ENCODE measurements at regions of chr16 and their contacts with region 1.

Region 1: GRCh38 chr16:48164907-48165726 is 9.3 kb upstream of the ABCC12 start:
- DNase-seq: peak; percentile 13
- H3K4me3 ChIP-seq: no peak overlapping the region
- H3K27ac ChIP-seq: no peak overlapping the region
- H3K27me3 ChIP-seq: no peaks in the 10 kb centered on the region
- CTCF ChIP-seq: peak; percentile 85

Region 2: DNA sequence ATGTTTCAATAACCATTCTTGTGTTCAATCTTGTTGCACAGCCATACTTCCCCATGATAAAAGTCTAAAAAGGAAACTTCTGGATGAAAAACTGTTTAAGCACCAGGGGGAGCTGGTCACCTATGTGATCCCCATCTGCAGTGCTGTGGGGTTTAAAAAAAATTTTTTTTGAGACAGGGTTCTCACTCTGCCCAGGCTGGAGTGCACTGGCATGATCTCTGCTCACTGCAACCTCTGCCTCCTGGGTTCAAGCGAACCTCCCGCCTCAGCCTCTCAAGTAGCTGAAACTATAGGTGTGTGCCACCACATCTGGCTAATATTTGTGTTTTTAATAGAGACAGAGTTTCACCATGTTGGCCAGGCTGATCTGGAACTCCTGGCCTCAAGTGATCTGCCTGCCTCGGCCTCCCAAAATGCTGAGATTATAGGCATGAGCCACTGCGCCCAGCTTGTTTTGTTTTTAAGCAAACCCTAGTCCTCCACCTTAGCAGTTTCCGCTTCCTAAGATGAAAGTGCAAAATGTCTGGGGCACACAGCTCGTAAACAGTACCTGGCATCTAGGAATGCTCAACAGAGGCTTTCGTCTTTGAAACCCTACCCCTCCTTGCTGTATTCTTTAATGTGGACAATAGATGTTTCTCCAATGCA is 1217.1 kb before region 1 on chr16:
- CTCF ChIA-PET with region 1: interaction called, 43 read pairs
- POLR2A ChIA-PET with region 1: no interaction called
- DNase-seq: no peak
- H3K4me3 ChIP-seq: no peak overlapping the region
- H3K27ac ChIP-seq: no peak overlapping the region
- H3K27me3 ChIP-seq: no peaks in the 10 kb centered on the region
- CTCF ChIP-seq: peak; percentile 73

Region 3: DNA sequence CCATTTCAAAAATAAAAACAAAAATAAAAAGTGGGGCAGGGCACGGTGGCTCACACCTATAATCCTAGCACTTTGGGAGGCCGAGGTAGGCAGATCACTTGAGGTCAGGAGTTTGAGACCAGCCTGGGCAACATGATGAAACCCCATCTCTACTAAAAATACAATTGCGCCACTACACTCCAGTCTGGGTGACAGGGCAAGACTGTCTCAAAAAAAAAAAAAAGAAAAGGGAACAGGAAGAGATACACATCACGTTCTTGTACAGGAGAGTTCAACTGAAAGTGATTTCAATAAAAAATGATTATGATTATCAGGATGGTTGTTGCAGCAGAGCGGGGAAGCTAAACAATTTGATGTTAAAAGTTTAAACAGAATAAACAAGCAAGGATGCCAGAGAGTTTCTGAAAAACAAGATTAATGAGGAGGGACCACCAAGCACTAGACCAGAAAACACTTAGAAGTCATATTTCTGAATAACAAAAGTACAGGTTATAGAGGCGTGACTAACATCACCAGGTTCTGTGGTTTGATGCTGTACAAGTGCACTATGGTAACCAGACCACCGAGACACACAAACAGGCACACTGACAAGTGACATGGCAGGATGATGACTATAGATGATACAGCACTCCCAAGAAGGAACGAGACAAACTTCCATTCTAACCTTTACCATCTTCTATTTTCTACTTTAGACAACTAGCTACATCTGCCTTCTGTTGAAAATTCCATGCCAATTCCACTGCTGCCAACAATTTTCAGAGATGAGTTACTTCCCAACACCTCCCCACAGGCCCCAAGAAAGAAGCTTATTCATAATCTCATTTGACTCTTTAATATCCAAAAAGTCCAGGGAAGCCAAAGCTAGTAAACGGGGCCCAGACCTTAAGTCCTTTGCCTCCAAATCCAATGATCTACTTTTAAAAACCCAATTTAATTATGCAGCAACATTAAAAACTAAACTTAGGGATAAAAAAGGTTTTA is 1203.5 kb before region 1 on chr16:
- CTCF ChIA-PET with region 1: interaction called, 11 read pairs
- POLR2A ChIA-PET with region 1: no interaction called
- DNase-seq: no peak
- H3K4me3 ChIP-seq: no peak overlapping the region
- H3K27ac ChIP-seq: peak overlapping the region; percentile 21
- H3K27me3 ChIP-seq: no peaks in the 10 kb centered on the region
- CTCF ChIP-seq: no peak

Region 4: GRCh38 chr16:47037746-47038458 is 1127.2 kb before region 1 on chr16:
- CTCF ChIA-PET with region 1: interaction called, 39 read pairs
- POLR2A ChIA-PET with region 1: interaction called, 4 read pairs
- DNase-seq: peak; percentile 44
- H3K4me3 ChIP-seq: peak overlapping the region; percentile 66
- H3K27ac ChIP-seq: no peak overlapping the region
- H3K27me3 ChIP-seq: peaks cover 11% of the 10 kb centered on the region
- CTCF ChIP-seq: peak; percentile 88

Region 5: GRCh38 chr16:47136101-47136820 is 1028.9 kb before region 1 on chr16:
- CTCF ChIA-PET with region 1: interaction called, 99 read pairs
- POLR2A ChIA-PET with region 1: no interaction called
- DNase-seq: no peak
- H3K4me3 ChIP-seq: no peak overlapping the region
- H3K27ac ChIP-seq: no peak overlapping the region
- H3K27me3 ChIP-seq: no peaks in the 10 kb centered on the region
- CTCF ChIP-seq: no peak

Region 6: DNA sequence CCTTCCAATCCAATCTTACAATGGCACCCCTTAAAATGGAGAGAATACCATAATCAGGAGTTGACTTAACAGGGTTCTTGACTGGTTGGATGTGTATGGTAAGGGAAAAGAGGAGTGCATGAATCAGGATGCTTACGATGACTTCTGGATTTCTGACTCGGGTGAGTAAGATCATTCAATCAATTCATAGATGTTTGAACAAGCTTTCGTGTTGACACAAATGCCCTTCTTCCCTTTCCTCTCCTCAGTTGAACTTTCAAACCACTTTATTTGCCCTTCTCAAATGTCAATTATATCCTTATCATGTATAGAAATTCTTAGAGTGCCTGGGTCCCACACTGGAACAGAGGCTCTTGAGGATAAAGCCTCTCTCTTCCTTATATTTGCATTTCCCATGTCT is 35.2 kb before region 1 on chr16:
- CTCF ChIA-PET with region 1: no interaction called
- POLR2A ChIA-PET with region 1: no interaction called
- DNase-seq: no peak
- H3K4me3 ChIP-seq: no peak overlapping the region
- H3K27ac ChIP-seq: no peak overlapping the region
- H3K27me3 ChIP-seq: no peaks in the 10 kb centered on the region
- CTCF ChIP-seq: no peak

Region 7: GRCh38 chr16:48383877-48384304 is 218.8 kb after region 1 on chr16:
- CTCF ChIA-PET with region 1: no interaction called
- POLR2A ChIA-PET with region 1: no interaction called
- DNase-seq: no peak
- H3K4me3 ChIP-seq: peak overlapping the region; percentile 82
- H3K27ac ChIP-seq: peak overlapping the region; percentile 87
- H3K27me3 ChIP-seq: no peaks in the 10 kb centered on the region
- CTCF ChIP-seq: no peak

Measured in AG04450 (cell line).